Transverse colon (tissue), 4 donors: ENCODE measurements at regions of chr5 and their contacts with region 1.

Region 1: DNA sequence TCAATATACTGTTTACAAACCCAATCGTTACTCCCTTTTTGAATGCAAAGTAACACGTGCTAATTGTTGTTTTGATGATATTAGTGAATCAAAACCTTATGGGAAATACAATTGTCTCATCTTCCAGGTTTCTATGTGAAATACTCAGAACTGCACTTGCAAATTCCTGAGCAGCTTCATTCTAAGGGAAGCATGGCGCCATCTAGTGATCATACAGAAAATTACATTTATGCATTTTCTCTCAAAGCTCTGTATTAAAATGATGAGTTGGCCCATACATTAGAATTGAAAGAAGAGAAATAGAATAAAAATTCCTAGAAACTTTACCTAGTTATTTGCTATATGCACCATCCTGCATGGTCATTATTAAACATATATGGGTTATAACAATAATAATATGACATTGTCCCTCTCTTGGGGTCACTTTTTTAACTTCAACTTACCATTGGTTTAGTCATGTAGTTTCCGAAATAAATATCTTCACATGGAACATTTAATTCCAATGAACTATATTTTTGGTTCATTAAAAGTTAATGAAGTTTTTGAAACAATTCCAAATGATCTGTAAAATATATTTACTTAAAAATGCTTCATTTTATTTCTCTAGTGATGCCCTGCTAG is 220.0 kb downstream of the PDE4D start:
- DNase-seq: no peak
- H3K4me3 ChIP-seq: no peak overlapping the region
- H3K27ac ChIP-seq: no peak overlapping the region
- H3K4me1 ChIP-seq: peaks cover 0 to 6% (median 0%) of the 10 kb centered on the region in 4 donors
- H3K27me3 ChIP-seq: no peaks in the 10 kb centered on the region
- CTCF ChIP-seq: peak; percentile 77 to 87 (median 83)
- EP300 ChIP-seq: no peak
- POLR2A ChIP-seq: no peak

Region 2: DNA sequence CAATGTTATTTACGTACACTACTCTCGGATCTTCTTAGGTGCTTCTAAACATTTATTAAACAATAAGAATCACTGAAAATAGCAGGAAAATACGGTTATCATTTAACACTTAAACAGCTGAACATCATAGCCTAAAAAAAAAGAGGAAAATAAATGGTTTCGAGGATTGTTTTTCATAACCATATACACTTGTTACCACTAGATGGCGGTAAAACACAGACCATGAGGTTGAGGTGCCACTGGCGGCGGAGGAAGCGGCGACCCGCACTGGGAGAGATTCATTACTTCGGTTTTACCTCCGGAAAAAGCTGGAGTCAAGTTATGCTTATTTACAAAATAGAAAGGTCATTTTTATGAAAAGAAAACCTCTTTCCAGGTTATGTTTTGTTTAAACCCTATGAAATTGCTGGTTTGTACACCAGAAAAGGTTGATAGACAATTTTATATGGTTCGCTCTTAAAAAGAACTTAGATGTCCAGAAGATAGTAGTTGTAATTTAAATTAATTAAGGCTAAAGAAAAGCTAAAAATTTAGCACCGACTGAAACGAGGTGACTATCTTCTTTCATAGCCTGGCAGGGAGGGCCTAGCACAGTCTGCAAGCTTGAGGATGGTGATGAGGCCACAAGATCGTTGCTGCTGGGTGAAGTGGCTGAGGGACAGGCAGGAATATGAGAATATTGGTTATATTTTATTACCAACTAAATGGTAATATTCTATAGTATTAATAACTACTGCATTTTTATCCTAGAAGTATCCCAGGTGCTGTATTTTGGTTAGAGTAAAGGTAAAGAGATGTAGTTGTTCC is 484.9 kb before region 1 on chr5:
- in situ Hi-C with region 1: loop called in 3 of 4 experiments (anchors 25 kb)
- intact Hi-C with region 1: no loop called
- DNase-seq: peak; percentile 69
- H3K4me3 ChIP-seq: peak overlapping the region in 1 of 4 donors; percentile 28
- H3K27ac ChIP-seq: peak overlapping the region; percentile 42 to 74 (median 57)
- H3K4me1 ChIP-seq: peaks cover 0 to 27% (median 6%) of the 10 kb centered on the region in 4 donors
- H3K27me3 ChIP-seq: no peaks in the 10 kb centered on the region
- CTCF ChIP-seq: peak; percentile 71 to 95 (median 87)
- EP300 ChIP-seq: no peak
- POLR2A ChIP-seq: no peak

Region 3: DNA sequence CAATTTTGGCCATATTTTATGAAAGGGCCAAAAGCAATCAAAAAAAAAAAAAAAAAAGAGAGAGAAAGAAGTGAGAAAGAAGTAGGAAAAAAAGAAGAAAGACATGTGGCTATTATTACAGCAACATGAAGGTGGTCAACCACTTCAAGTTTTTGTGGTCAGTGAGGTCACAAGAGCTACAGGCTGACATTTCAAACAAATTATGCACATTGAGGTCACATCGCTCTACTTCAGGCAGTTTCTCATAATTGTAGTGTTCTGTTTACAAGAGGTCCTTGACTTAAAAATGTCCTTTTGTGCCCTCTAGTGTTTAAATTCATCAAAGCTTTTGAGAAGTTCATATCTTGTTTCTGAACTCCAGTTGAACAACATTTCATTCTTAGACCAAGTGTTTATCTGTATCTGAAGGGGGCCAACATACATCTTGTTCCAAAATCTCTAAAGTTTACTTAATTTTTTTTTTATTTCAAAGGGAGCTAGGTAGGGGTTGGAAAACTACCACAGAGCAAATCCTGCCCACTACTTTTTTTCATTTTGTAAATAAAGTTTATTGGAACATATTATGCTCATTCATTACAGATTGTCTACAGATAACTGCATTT is 293.1 kb before region 1 on chr5:
- in situ Hi-C with region 1: loop called in 3 of 4 experiments (anchors 5 to 25 kb)
- intact Hi-C with region 1: no loop called
- DNase-seq: no peak
- H3K4me3 ChIP-seq: no peak overlapping the region
- H3K27ac ChIP-seq: peak overlapping the region; percentile 15 to 60 (median 34)
- H3K4me1 ChIP-seq: peaks cover 0 to 12% (median 0%) of the 10 kb centered on the region in 4 donors
- H3K27me3 ChIP-seq: no peaks in the 10 kb centered on the region
- CTCF ChIP-seq: peak; percentile 43 to 63 (median 56)
- EP300 ChIP-seq: no peak
- POLR2A ChIP-seq: no peak

Region 4: DNA sequence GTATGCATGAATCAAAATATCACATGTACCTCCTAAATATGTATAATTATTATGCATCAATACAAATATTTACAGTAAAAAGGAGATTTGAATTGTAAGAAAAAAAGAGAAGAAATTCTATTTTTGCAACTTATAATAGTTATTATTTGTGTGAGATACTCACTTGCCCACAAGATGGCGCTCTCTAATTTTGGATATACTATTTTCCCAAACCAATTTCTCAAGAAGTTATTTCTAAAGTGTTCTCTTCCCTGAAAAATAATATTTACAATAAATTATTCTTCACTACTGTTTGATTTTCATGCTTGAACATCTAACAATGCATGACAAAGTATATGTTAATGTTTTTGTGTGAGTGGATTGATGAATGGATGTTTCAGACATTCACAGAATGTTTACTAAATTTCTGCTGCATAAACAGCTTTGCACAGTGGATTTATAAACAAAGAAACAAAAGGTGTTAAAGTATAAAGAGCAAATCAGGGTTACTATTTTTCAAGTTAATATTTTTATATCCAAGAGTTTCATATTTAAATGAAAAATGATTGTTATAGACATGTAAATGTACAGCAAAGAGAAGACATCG is 283.4 kb before region 1 on chr5:
- in situ Hi-C with region 1: loop called (anchors 5 to 25 kb)
- intact Hi-C with region 1: loop called (anchors 10 kb)
- DNase-seq: no peak
- H3K4me3 ChIP-seq: no peak overlapping the region
- H3K27ac ChIP-seq: no peak overlapping the region
- H3K4me1 ChIP-seq: peaks cover 0 to 9% (median 0%) of the 10 kb centered on the region in 4 donors
- H3K27me3 ChIP-seq: no peaks in the 10 kb centered on the region
- CTCF ChIP-seq: peak; percentile 57 to 79 (median 73)
- EP300 ChIP-seq: no peak
- POLR2A ChIP-seq: no peak

Region 5: DNA sequence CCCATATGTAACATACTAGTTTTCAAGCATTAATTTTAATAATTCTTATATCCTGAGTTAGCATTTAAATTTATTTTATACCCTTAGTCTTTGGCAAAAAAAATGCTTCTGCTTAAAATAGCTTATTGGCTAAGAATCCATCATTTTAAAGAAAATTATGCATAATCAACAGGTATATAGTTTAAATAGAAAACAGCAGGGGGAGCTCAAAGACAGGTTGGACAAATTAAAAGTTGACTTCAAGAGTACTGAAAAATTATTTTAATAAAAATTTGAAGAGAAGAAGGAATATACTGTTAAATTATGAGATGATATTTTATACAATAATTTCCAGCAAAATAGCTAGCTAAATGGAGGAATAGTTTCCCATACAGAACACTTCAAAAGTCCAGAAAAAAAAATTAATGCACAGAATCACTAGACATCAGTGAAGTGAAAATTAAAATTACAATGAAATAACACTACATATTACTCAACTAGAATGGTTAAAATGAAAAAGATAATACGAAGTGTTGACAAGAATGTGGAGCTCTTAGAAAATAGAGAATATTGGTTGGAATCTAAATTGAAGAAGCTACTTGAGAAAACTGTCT is 167.2 kb before region 1 on chr5:
- in situ Hi-C with region 1: loop called (anchors 10 to 25 kb)
- intact Hi-C with region 1: no loop called
- DNase-seq: no peak
- H3K4me3 ChIP-seq: no peak overlapping the region
- H3K27ac ChIP-seq: no peak overlapping the region
- H3K4me1 ChIP-seq: peaks cover 0 to 9% (median 4%) of the 10 kb centered on the region in 4 donors
- H3K27me3 ChIP-seq: no peaks in the 10 kb centered on the region
- CTCF ChIP-seq: peak; percentile 53 to 68 (median 59)
- EP300 ChIP-seq: no peak
- POLR2A ChIP-seq: no peak